ENCODE measurements at regions of chr1 and their contacts with region 1.

Region 1: GRCh38 chr1:151968058-151968457 is 25.6 kb downstream of the S100A10 start:
- DNase-seq: peak; percentile 59
- H3K4me3 Mint-ChIP-seq: no peak overlapping the region
- H3K27ac Mint-ChIP-seq: no peak overlapping the region
- H3K4me1 Mint-ChIP-seq: peaks cover 25% of the 10 kb centered on the region
- H3K27me3 Mint-ChIP-seq: no peaks in the 10 kb centered on the region

Region 2: DNA sequence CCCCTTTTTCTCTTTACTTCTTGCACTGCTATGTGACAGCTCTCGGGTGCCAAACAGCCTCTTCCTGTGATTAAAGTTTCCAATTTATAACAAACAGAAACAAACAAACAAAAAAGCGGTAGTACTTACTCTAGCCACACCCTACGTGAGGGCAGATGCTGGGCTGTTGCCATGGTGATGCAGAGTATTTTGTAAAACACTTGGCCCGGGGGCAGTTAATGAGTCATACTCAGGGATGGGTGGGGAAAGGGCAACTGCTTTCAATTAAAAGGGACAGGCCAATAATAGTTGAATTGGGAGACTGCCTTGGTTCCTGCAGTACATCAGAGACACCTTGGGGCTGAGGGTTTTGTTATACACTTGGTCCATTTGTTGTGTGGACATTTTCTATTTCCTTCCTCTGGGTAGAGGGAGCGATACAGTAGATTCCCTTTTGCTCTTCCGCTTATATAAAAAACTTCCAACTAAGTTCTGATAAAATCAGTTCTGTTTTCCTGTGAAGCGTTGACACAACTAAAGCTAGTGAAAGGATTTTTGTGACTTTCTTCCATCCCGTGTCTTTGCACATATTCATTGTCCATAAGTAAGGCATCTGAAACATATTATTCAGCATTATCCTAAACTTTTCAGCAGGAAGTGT is 22.2 kb before region 1 on chr1:
- CTCF ChIA-PET with region 1: interaction called, 12 read pairs
- POLR2A ChIA-PET with region 1: interaction called, 7 read pairs
- DNase-seq: peak; percentile 90
- H3K4me3 Mint-ChIP-seq: peak overlapping the region; percentile 56
- H3K27ac Mint-ChIP-seq: peak overlapping the region; percentile 88
- H3K4me1 Mint-ChIP-seq: peaks cover 41% of the 10 kb centered on the region
- H3K27me3 Mint-ChIP-seq: no peaks in the 10 kb centered on the region

Region 3: GRCh38 chr1:151984313-151984956 is 16.4 kb after region 1 on chr1:
- CTCF ChIA-PET with region 1: interaction called, 20 read pairs
- POLR2A ChIA-PET with region 1: interaction called, 8 read pairs
- DNase-seq: peak; percentile 60
- H3K4me3 Mint-ChIP-seq: peak overlapping the region; percentile 7
- H3K27ac Mint-ChIP-seq: peak overlapping the region; percentile 76
- H3K4me1 Mint-ChIP-seq: peaks cover 63% of the 10 kb centered on the region
- H3K27me3 Mint-ChIP-seq: no peaks in the 10 kb centered on the region

Region 4: GRCh38 chr1:152001391-152002249 is 33.6 kb after region 1 on chr1:
- CTCF ChIA-PET with region 1: interaction called, 221 read pairs
- POLR2A ChIA-PET with region 1: interaction called, 9 read pairs
- DNase-seq: peak; percentile 84
- H3K4me3 Mint-ChIP-seq: no peak overlapping the region
- H3K27ac Mint-ChIP-seq: no peak overlapping the region
- H3K4me1 Mint-ChIP-seq: peaks cover 22% of the 10 kb centered on the region
- H3K27me3 Mint-ChIP-seq: peaks cover 21% of the 10 kb centered on the region

Region 5: DNA sequence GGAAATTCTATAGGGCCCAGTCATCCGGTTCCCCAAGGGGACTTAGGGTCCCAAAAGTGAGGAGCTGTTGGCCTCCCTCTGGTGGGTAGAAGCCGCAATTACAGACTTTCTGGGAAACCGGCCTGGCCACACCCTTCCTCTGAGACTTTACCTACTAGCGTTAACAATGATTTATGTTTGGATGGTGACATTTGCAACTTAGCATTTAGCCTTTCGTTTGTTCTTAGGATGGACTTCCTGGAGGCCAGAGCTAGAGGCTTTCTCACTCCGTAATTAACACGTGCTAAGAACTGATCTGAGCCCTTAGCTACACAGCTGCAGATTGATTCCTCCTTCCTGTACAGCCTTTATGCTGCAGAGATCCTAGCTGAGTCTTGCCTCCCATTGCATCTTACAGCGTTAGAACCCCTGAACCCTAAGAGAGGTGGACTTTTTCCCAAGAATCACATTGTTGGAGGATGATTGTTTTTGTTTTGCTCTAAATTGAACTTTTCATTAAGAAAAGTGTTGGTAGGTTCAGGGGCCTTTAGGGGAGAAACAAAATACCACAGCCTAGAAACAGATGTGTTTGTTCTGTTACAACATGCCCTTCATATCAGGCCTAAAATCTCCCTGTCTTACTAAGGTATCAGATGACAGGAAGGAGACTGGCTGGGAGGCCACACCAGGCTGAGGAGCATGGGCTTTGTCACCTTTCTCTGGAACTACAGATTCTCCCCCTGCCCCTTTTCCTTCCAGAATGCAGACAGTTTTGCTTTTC is 66.8 kb after region 1 on chr1:
- CTCF ChIA-PET with region 1: interaction called, 11 read pairs
- POLR2A ChIA-PET with region 1: interaction called, 4 read pairs
- DNase-seq: peak; percentile 74
- H3K4me3 Mint-ChIP-seq: peak overlapping the region; percentile 95
- H3K27ac Mint-ChIP-seq: peak overlapping the region; percentile 95
- H3K4me1 Mint-ChIP-seq: peaks cover 52% of the 10 kb centered on the region
- H3K27me3 Mint-ChIP-seq: no peaks in the 10 kb centered on the region

Region 6: GRCh38 chr1:152050886-152051675 is 83.0 kb after region 1 on chr1:
- CTCF ChIA-PET with region 1: no interaction called
- POLR2A ChIA-PET with region 1: no interaction called
- DNase-seq: no peak
- H3K4me3 Mint-ChIP-seq: no peak overlapping the region
- H3K27ac Mint-ChIP-seq: no peak overlapping the region
- H3K4me1 Mint-ChIP-seq: peaks cover 48% of the 10 kb centered on the region
- H3K27me3 Mint-ChIP-seq: peaks cover 27% of the 10 kb centered on the region

Region 7: GRCh38 chr1:152328801-152329391 is 360.8 kb after region 1 on chr1:
- CTCF ChIA-PET with region 1: no interaction called
- POLR2A ChIA-PET with region 1: no interaction called
- DNase-seq: no peak
- H3K4me3 Mint-ChIP-seq: no peak overlapping the region
- H3K27ac Mint-ChIP-seq: no peak overlapping the region
- H3K4me1 Mint-ChIP-seq: no peaks in the 10 kb centered on the region
- H3K27me3 Mint-ChIP-seq: peaks cover 9% of the 10 kb centered on the region

Measured in activated CD4-positive, alpha-beta memory T cell treated with anti-CD3 and anti-CD28 coated beads, Interleukin-2, amount 10 ng/mL, durations not matched to agents 7 days and 5 days (primary cell).